PC-9 (cell line): ENCODE measurements at regions of chr12 and their contacts with region 1.

Region 1: GRCh38 chr12:9797722-9798619 is 29.3 kb upstream of the KLRF1 start:
- DNase-seq: peak; percentile 83 to 94
- H3K4me3 ChIP-seq: no peak overlapping the region
- H3K27ac ChIP-seq: no peak overlapping the region
- H3K4me1 ChIP-seq: peaks cover 39% of the 10 kb centered on the region
- H3K27me3 ChIP-seq: no peaks in the 10 kb centered on the region
- CTCF ChIP-seq: peak; percentile 75

Region 2: DNA sequence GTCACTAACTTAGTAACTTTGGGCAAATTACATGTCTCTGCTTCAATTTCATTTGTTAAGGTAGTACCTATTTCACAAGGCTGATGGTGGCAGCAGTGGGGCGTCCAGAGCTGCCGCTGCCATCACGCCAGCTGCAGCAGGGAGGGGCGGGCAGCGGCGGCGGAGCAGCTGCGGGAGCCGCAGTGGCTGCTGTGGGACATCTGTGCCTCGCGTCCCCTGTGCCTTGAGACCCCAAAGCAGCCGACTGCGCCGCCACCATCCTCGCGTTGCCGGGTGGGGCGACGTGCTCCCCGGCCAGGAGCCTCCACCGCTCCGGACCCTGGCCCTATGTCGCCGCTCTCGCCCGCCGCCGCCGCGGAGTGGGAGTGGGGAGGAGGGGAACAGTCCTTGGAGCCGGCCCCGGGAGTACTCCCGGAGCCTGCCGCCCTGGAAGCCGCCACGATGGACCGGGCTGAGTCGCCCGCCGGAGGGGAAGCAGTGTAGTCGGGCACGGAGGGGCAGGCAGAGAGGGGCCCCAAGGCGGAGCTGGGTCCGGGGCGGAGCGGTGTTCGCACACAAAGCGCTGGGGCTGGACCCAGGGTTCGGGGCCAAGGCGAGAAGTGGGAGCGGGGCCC is 733.7 kb before region 1 on chr12:
- CTCF ChIA-PET with region 1: no interaction called
- POLR2A ChIA-PET with region 1: no interaction called
- intact Hi-C with region 1: loop called (anchors 5 kb)
- DNase-seq: peak; percentile 55 to 75
- H3K4me3 ChIP-seq: peak overlapping the region; percentile 82
- H3K27ac ChIP-seq: peak overlapping the region; percentile 56
- H3K4me1 ChIP-seq: peaks cover 6% of the 10 kb centered on the region
- H3K27me3 ChIP-seq: no peaks in the 10 kb centered on the region; the same call in 1 of the 2 replicates
- CTCF ChIP-seq: peak; percentile 49; the same call in 1 of the 2 replicates

Region 3: DNA sequence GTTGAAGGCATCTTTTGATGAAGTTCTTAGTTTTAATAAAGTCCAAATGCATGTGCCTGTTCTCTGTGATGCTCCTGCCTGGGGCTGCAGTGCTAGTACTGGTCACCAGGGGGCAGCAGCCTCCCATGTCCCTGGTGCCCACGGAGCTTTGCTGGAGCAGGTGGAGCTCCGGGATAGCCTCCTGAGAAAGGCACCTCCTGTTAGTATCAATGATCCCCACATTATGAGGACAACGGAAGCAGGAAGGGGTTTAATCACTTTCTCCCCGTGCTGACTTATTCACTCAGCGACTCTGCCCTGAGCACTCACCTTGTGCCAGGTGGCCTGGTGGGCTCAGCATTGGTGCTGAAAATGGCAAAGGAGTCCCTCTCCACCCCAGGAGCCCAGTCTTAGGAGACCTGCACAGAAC is 466.7 kb before region 1 on chr12:
- CTCF ChIA-PET with region 1: no interaction called
- POLR2A ChIA-PET with region 1: no interaction called
- intact Hi-C with region 1: loop called (anchors 1 kb)
- DNase-seq: peak in 1 of 2 experiments; percentile 65
- H3K4me3 ChIP-seq: no peak overlapping the region
- H3K27ac ChIP-seq: no peak overlapping the region
- H3K4me1 ChIP-seq: no peaks in the 10 kb centered on the region
- H3K27me3 ChIP-seq: no peaks in the 10 kb centered on the region
- CTCF ChIP-seq: peak; percentile 96

Region 4: DNA sequence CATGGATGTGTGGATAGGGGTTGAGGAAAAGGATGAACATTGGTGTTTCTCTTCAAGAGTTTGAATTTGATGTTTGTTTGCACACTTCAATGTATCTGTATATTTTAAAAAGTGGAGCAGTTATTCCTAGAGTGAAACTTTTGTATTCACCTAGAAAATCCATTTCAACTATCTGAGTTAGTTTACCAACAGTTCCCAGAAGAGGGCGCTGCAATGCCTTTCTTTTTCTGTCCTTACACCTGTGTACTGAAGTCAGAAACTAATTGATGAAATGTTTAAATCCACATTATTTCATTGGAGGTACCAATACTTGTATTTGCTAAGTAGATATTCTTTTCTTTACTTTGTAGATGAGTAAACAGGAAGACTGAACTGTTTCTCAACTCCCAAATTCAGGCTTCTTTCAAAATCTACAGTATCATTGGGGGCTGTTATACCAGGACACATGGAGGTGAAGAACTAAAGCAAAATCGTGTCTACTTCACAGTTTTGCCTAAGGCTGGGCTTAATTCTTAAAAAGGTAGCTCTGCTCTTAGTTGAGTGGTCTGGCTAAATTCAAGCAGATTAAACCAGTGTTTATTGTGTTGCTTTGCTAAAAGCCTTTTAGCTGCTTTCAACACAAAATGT is 163.7 kb before region 1 on chr12:
- CTCF ChIA-PET with region 1: interaction called, 4 read pairs
- POLR2A ChIA-PET with region 1: no interaction called
- intact Hi-C with region 1: loop called (anchors 1 kb)
- DNase-seq: peak; percentile 43 to 56
- H3K4me3 ChIP-seq: no peak overlapping the region
- H3K27ac ChIP-seq: no peak overlapping the region
- H3K4me1 ChIP-seq: peaks cover 20% of the 10 kb centered on the region
- H3K27me3 ChIP-seq: no peaks in the 10 kb centered on the region
- CTCF ChIP-seq: peak; percentile 90

Region 5: GRCh38 chr12:9707864-9708808 is 89.8 kb before region 1 on chr12:
- CTCF ChIA-PET with region 1: no interaction called
- POLR2A ChIA-PET with region 1: no interaction called
- intact Hi-C with region 1: no loop called
- DNase-seq: peak in 1 of 2 experiments; percentile 21
- H3K4me3 ChIP-seq: no peak overlapping the region
- H3K27ac ChIP-seq: no peak overlapping the region
- H3K4me1 ChIP-seq: peaks cover 15% of the 10 kb centered on the region
- H3K27me3 ChIP-seq: no peaks in the 10 kb centered on the region
- CTCF ChIP-seq: peak; percentile 85

Region 6: GRCh38 chr12:9741726-9742125 is 56.2 kb before region 1 on chr12:
- CTCF ChIA-PET with region 1: interaction called, 10 read pairs
- POLR2A ChIA-PET with region 1: no interaction called
- intact Hi-C with region 1: no loop called
- DNase-seq: no peak
- H3K4me3 ChIP-seq: no peak overlapping the region
- H3K27ac ChIP-seq: no peak overlapping the region
- H3K4me1 ChIP-seq: peaks cover 27% of the 10 kb centered on the region
- H3K27me3 ChIP-seq: no peaks in the 10 kb centered on the region
- CTCF ChIP-seq: no peak

Region 7: GRCh38 chr12:10052193-10052913 is 254.4 kb after region 1 on chr12:
- CTCF ChIA-PET with region 1: no interaction called
- POLR2A ChIA-PET with region 1: no interaction called
- intact Hi-C with region 1: no loop called
- DNase-seq: no peak
- H3K4me3 ChIP-seq: no peak overlapping the region
- H3K27ac ChIP-seq: no peak overlapping the region
- H3K4me1 ChIP-seq: no peaks in the 10 kb centered on the region
- H3K27me3 ChIP-seq: no peaks in the 10 kb centered on the region
- CTCF ChIP-seq: no peak

Region 8: GRCh38 chr12:10212201-10213131 is 414.5 kb after region 1 on chr12 and contains the start of gene GABARAPL1:
- CTCF ChIA-PET with region 1: no interaction called
- POLR2A ChIA-PET with region 1: no interaction called
- intact Hi-C with region 1: loop called (anchors 2 kb)
- DNase-seq: peak; percentile 99
- H3K4me3 ChIP-seq: peak within 1 kb of the TSS; percentile 85
- H3K27ac ChIP-seq: peak within 1 kb of the TSS; percentile 90
- H3K4me1 ChIP-seq: peaks cover 20% of the 10 kb centered on the region
- H3K27me3 ChIP-seq: no peaks in the 10 kb centered on the region
- CTCF ChIP-seq: no peak
- total RNA-seq, gene GABARAPL1: 85.6 and 143 TPM in 2 replicates

Region 9: DNA sequence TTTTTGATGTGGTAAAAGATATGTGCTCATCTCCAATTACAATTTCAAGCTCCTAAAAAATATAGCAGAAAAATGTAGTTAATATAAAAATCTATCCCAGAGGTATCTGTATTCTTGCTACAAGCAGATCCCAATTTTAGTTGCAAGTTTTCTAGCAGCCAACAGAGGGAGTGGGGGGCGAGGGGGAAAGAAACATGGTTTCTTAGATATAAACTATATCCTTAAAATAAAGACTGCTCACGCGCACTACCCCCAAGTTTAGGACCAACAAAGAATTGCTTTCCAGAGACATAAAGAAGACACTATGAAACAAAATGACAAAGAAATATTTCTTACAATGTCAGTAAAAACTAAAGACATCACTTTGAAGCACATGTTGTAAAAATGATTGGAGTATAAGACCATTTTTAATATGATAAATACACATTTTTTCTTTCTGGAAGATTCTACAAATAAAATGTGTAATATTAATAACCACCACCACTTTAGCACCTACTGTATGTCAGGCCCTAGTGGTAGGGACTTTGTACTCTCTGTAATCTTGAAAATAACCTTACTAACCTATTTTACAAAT is 810.0 kb after region 1 on chr12:
- CTCF ChIA-PET with region 1: no interaction called
- POLR2A ChIA-PET with region 1: interaction called, 17 read pairs
- intact Hi-C with region 1: no loop called
- DNase-seq: no peak
- H3K4me3 ChIP-seq: no peak overlapping the region
- H3K27ac ChIP-seq: no peak overlapping the region
- H3K4me1 ChIP-seq: 0 out of 2 replicates have a peak, but pooled peaks cover 11% of the 10 kb centered on the region
- H3K27me3 ChIP-seq: no peaks in the 10 kb centered on the region
- CTCF ChIP-seq: peak; percentile 56